HAP-1 (cell line): ENCODE measurements at regions of chr17 and their contacts with region 1.

Region 1: GRCh38 chr17:41738077-41738735 is 3.8 kb upstream of the HAP1 start:
- DNase-seq: peak; percentile 77 to 90
- H3K4me3 ChIP-seq: no peak overlapping the region
- H3K4me1 ChIP-seq: peaks cover 6% of the 10 kb centered on the region; the same call in 1 of the 2 replicates
- H3K27me3 ChIP-seq: peaks cover 27% of the 10 kb centered on the region

Region 2: DNA sequence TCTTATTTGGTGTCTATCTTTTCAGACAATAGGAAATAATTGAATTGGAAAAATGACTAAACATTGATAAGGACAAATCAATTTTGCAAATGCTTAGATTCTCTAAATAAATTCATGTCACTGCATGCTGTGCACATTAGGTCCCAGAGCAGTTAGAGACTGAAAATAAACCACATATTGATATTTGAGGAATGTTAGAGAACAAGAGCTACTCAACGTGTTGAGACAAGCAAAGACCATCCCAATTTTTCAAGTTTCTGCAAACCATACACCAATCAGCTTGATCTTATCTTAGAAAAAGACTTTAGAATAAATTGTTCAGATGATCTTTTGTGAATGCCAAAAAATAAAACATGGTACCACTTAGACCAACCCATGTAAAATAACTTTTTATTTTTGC is 446.9 kb before region 1 on chr17:
- in situ Hi-C with region 1: no loop called
- DNase-seq: no peak
- H3K4me3 ChIP-seq: no peak overlapping the region
- H3K4me1 ChIP-seq: no peaks in the 10 kb centered on the region
- H3K27me3 ChIP-seq: peaks cover 6% of the 10 kb centered on the region

Region 3: DNA sequence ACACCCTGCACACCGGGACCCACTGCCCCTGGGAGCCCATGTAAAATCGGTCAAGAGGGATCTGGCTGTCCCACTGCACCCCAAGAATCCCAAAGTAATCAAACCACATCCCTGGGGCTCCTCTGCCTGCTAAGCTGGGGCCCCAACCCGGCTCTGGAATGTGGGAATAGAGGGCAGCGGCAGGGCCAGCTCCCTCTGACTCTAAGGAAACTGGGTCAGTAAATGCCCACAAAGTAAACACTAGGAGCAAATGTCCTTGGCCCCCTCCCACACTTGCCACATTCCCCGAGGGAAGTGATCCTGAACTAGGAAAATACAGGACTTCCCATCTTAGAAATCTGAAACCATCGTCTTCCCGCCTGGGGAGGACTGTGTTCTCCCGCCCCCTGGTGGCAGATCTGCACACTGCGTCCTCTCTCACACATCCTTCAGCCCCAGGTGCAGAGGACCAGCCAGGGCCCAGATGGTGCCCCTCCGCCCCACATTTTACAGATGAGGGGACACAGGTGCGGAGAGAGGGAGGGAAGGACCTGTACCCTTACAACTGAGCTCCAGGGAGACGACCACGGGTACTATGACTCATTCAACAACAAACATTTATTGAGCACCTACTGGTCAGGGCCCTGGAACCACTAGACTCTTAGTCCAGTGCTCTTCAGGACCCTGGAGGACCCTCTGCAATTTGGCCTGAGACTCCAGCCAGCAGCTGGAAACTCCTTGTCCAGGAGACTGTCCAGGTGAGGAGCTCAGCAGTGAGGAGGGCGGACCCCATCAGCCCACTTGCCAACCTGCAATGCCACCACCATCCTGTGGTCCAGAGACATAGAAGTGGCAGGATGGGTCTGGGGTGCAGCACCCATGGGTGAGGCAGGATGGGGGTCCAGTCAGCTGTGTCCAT is 63.4 kb after region 1 on chr17:
- in situ Hi-C with region 1: loop called (anchors 5 kb)
- DNase-seq: peak; percentile 76 to 90
- H3K4me3 ChIP-seq: no peak overlapping the region
- H3K4me1 ChIP-seq: peaks cover 4% of the 10 kb centered on the region
- H3K27me3 ChIP-seq: no peaks in the 10 kb centered on the region